ENCODE measurements at regions of chr3 and their contacts with region 1.

Region 1: DNA sequence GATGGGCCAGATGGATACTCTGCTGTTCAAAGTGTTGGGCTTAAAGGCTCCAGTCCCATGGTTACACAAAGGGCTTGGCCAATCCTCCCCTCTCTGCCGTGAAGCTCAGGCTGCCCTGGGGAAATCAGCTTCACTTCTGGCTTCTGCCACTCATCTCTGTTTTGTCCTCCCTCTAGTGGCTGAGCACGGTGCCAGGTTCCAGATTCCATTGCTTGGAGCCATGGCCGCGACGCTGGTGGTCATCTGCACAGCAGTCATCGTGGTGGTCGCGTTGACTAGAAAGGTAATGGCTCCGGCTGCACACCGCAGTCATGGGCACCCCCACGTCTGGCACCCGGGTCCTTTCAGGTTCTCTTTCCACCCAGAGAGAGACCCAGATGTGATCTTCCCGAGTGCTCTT is 5.6 kb downstream of the TIGIT start:
- DNase-seq: no peak
- H3K4me3 ChIP-seq: no peak overlapping the region
- H3K27ac ChIP-seq: no peak overlapping the region
- H3K4me1 ChIP-seq: no peaks in the 10 kb centered on the region
- H3K27me3 ChIP-seq: no peaks in the 10 kb centered on the region
- CTCF ChIP-seq: peak in 2 of 5 experiments; percentile 11 to 12
- EP300 ChIP-seq: no peak
- POLR2A ChIP-seq: no peak

Region 2: DNA sequence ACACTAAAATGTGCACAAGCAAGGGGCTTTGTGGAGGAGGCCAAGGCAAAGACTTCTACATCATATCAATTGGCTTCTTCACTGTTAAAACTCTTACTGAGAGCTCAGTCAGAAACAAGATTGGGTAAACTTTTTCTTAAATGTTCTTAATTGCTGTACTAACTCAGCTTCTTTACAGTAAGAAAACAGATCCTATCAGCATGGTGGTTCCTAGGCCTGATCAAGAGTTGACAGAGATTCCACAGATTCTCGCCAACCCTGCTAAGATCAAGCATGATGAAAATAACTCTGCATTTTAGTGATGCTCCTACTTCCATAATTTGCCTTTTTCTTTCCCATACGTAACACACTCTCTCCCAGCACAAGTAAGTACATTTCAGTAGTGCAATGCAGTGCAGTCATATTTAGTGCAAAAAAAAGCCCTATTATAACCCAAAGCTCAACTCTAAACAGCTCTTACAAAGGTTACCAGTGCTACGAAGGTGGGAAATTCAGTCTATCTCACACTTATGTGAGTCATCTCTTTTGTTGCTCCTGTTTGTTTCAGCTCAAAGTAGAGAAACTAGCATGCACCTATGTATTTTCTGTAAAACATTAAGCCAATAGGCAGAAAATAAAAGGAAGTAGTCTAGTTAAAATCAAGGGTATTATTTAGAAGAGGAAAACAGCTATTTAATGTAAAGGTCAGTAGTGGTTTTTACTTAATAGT is 24.3 kb after region 1 on chr3:
- in situ Hi-C with region 1: no loop called
- intact Hi-C with region 1: loop called (anchors 1 kb)
- DNase-seq: no peak
- H3K4me3 ChIP-seq: no peak overlapping the region
- H3K27ac ChIP-seq: no peak overlapping the region
- H3K4me1 ChIP-seq: peaks cover 0 to 9% (median 0%) of the 10 kb centered on the region in 4 donors
- H3K27me3 ChIP-seq: no peaks in the 10 kb centered on the region
- CTCF ChIP-seq: no peak
- EP300 ChIP-seq: no peak
- POLR2A ChIP-seq: no peak

Measured in transverse colon (tissue), 4 donors.